ENCODE measurements at regions of chr17 and their contacts with region 1.

Region 1: DNA sequence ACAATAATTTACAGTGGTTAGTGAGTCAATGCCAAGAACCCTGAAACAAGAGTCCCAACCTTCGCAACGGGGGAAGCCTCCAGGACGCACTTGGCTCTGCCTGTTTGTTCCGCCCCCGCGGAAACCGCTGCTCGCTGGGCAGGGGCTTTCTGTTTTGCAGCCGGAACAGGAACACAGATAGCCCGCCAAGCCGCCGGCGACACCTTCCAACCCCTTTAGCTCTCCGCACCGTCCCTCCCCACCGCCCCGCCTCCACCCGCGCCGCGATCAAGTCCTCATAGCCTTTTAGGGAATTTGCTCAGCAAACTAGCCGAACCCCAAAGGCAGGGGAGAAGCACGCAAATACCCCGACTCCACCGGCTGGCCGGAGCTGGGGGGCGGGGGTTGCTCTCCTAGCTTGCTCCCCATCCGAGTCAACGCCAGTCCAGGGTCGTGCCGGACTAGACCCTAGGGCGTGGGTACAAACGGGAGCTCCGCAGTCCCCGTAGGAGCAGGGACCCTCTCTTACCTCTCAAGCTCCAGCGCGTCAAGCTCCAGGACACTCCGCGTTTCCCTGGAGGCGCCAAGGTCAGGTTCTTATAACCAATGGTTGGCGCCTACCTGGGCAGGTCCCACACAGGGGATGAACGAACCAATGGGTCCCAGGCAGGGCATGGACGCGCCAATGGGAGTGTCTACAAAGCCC is at the start of gene SLFN13:
- DNase-seq: peak; percentile 87
- ATAC-seq: peak; percentile 84
- H3K4me3 ChIP-seq: peak within 1 kb of the TSS; percentile 48 to 90 (median 83)
- H3K4me3 Mint-ChIP-seq: peak within 1 kb of the TSS; percentile 93
- H3K27ac ChIP-seq: peak within 1 kb of the TSS; percentile 79 to 84
- H3K27ac Mint-ChIP-seq: peak within 1 kb of the TSS; percentile 87
- H3K4me1 ChIP-seq: peaks cover 14 to 26% of the 10 kb centered on the region in 2 donors
- H3K4me1 Mint-ChIP-seq: peaks cover 25% of the 10 kb centered on the region
- H3K27me3 ChIP-seq: no peaks in the 10 kb centered on the region
- H3K27me3 Mint-ChIP-seq: no peaks in the 10 kb centered on the region
- CTCF ChIP-seq: no peak
- total RNA-seq, gene SLFN13: 30.9 and 31.0 TPM in 2 replicates

Region 2: GRCh38 chr17:35373534-35373983 is 74.8 kb before region 1 on chr17 and contains the start of gene SLFN11:
- CTCF ChIA-PET with region 1: no interaction called
- POLR2A ChIA-PET with region 1: interaction called, 8 read pairs
- intact Hi-C with region 1: loop called (anchors 5 kb)
- DNase-seq: peak; percentile 85
- ATAC-seq: peak; percentile 77
- H3K4me3 ChIP-seq: peak within 1 kb of the TSS; percentile 18 to 87 (median 72)
- H3K4me3 Mint-ChIP-seq: peak within 1 kb of the TSS; percentile 96
- H3K27ac ChIP-seq: peak within 1 kb of the TSS; percentile 79 to 85
- H3K27ac Mint-ChIP-seq: peak within 1 kb of the TSS; percentile 99
- H3K4me1 ChIP-seq: peaks cover 7 to 8% of the 10 kb centered on the region in 2 donors
- H3K4me1 Mint-ChIP-seq: peaks cover 49% of the 10 kb centered on the region
- H3K27me3 ChIP-seq: no peaks in the 10 kb centered on the region
- H3K27me3 Mint-ChIP-seq: no peaks in the 10 kb centered on the region
- CTCF ChIP-seq: no peak
- total RNA-seq, gene SLFN11: 48.1 and 52.2 TPM in 2 replicates

Region 3: DNA sequence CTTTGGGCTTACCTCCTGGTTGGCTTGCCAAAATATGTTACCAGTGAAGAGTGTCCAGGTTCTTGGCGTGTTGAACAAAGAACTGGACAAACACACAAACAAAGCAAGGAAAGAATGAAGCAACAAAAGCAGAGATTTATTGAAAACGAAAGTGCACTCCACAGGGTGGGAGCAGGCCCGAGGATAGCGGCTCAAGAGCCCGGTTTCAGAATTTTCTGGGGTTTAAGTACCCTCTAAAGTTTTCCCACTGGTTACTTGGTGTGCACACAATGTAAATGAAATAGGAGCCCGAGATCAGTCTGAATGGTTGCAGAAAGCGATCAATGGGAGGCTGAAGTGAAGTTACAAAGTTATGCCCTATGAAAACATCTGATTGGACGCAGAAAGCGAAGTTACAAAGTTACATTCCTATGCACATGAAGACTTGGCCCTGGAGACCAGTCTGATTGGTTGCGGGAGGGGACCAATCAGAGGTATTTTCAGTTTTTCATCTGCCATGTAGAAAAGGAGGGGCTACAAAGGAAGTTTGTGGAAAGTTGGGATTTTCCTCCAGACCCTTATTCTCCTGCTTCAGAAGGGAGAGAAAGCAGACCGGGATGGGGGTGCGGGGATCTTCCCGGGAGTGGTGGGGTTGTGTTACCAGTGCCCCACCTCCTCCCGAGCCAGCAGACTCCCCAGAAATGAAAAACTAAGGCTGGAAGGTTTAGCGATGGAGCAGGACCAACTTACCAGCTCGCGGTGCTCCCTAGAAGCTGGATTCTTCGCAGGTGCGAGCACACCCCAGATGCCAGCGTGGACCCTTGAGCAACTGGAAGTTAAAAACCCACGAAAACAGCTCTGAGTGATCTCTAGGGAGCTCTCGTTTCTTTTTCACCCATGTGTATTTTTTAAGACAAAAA is 15.9 kb before region 1 on chr17 and contains the start of gene SLFN12:
- CTCF ChIA-PET with region 1: interaction called, 8 read pairs
- POLR2A ChIA-PET with region 1: interaction called, 3 read pairs
- intact Hi-C with region 1: loop called (anchors 1 kb)
- DNase-seq: peak; percentile 81
- ATAC-seq: peak; percentile 92
- H3K4me3 ChIP-seq: peak within 1 kb of the TSS; percentile 74 to 96 (median 90)
- H3K4me3 Mint-ChIP-seq: peak within 1 kb of the TSS; percentile 99
- H3K27ac ChIP-seq: peak within 1 kb of the TSS; percentile 38 to 65
- H3K27ac Mint-ChIP-seq: peak within 1 kb of the TSS; percentile 95
- H3K4me1 ChIP-seq: peaks cover 18 to 22% of the 10 kb centered on the region in 2 donors
- H3K4me1 Mint-ChIP-seq: peaks cover 24% of the 10 kb centered on the region
- H3K27me3 ChIP-seq: no peaks in the 10 kb centered on the region
- H3K27me3 Mint-ChIP-seq: no peaks in the 10 kb centered on the region
- CTCF ChIP-seq: no peak
- total RNA-seq, gene SLFN12: 8.0 and 10.4 TPM in 2 replicates

Region 4: DNA sequence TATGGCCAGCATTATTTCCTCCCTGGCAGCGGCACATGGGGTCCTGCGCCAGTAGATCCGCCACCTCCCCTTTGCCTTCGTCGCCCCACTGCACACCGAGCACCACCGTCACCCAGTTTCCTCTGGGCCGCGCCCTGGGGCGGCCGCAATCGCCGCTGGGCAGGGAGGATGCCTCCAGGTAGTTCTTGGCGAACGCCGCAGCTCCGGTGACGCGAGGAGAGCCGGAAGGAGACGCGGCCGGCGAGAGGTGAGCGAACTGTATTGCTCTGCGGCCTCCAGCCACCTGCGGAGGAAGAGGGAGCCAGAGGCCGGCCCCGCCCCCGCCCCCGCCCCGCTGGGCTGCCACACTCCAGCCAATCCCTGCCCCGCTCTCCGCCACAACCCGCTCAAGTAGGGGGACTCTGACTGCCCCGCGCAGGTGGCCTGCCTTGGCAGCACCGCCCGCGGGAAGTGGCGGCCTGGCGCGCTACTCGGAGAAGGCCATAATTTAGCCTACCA is 12.0 kb after region 1 on chr17:
- CTCF ChIA-PET with region 1: interaction called, 3 read pairs
- POLR2A ChIA-PET with region 1: no interaction called
- intact Hi-C with region 1: loop called (anchors 1 kb)
- DNase-seq: peak; percentile 92
- ATAC-seq: peak; percentile 92
- H3K4me3 ChIP-seq: peak overlapping the region in 4 of 5 experiments; percentile 11 to 56 (median 42)
- H3K4me3 Mint-ChIP-seq: peak overlapping the region; percentile 88
- H3K27ac ChIP-seq: peak overlapping the region; percentile 22 to 39
- H3K27ac Mint-ChIP-seq: peak overlapping the region; percentile 87
- H3K4me1 ChIP-seq: peaks cover 12 to 13% of the 10 kb centered on the region in 2 donors
- H3K4me1 Mint-ChIP-seq: peaks cover 21% of the 10 kb centered on the region
- H3K27me3 ChIP-seq: no peaks in the 10 kb centered on the region
- H3K27me3 Mint-ChIP-seq: no peaks in the 10 kb centered on the region
- CTCF ChIP-seq: no peak

Region 5: GRCh38 chr17:35486920-35487732 is 38.8 kb after region 1 on chr17:
- CTCF ChIA-PET with region 1: interaction called, 8 read pairs
- POLR2A ChIA-PET with region 1: interaction called, 11 read pairs
- intact Hi-C with region 1: loop called (anchors 2 kb)
- DNase-seq: peak; percentile 65
- ATAC-seq: peak; percentile 53
- H3K4me3 ChIP-seq: peak overlapping the region; percentile 67 to 94 (median 79)
- H3K4me3 Mint-ChIP-seq: peak overlapping the region; percentile 98
- H3K27ac ChIP-seq: no peak overlapping the region
- H3K27ac Mint-ChIP-seq: peak overlapping the region; percentile 87
- H3K4me1 ChIP-seq: peaks cover 22 to 23% of the 10 kb centered on the region in 2 donors
- H3K4me1 Mint-ChIP-seq: peaks cover 25% of the 10 kb centered on the region
- H3K27me3 ChIP-seq: peaks cover 0 to 44% (median 35%) of the 10 kb centered on the region in 4 experiments
- H3K27me3 Mint-ChIP-seq: peaks cover 36% of the 10 kb centered on the region
- CTCF ChIP-seq: no peak

Region 6: GRCh38 chr17:35534576-35535093 is 86.3 kb after region 1 on chr17:
- CTCF ChIA-PET with region 1: interaction called, 10 read pairs
- POLR2A ChIA-PET with region 1: no interaction called
- intact Hi-C with region 1: no loop called
- DNase-seq: no peak
- ATAC-seq: no peak
- H3K4me3 ChIP-seq: no peak overlapping the region
- H3K4me3 Mint-ChIP-seq: no peak overlapping the region
- H3K27ac ChIP-seq: no peak overlapping the region
- H3K27ac Mint-ChIP-seq: no peak overlapping the region
- H3K4me1 ChIP-seq: peaks cover 3 to 5% of the 10 kb centered on the region in 2 donors
- H3K4me1 Mint-ChIP-seq: peaks cover 18% of the 10 kb centered on the region
- H3K27me3 ChIP-seq: no peaks in the 10 kb centered on the region
- H3K27me3 Mint-ChIP-seq: no peaks in the 10 kb centered on the region
- CTCF ChIP-seq: no peak

Measured in B cell (primary cell).